ENCODE measurements at regions of chrX and their contacts with region 1.

Region 1: GRCh38 chrX:74133156-74133796 is 170.7 kb upstream of the ZCCHC13 start:
- DNase-seq: peak in 5 of 9 experiments; percentile 10 to 60 (median 28)
- ATAC-seq: peak; percentile 40
- H3K4me3 ChIP-seq: no peak overlapping the region
- H3K4me3 Mint-ChIP-seq: no peak overlapping the region
- H3K27ac ChIP-seq: no peak overlapping the region
- H3K27ac Mint-ChIP-seq: no peak overlapping the region
- H3K4me1 ChIP-seq: no peaks in the 10 kb centered on the region
- H3K4me1 Mint-ChIP-seq: no peaks in the 10 kb centered on the region
- H3K27me3 ChIP-seq: no peaks in the 10 kb centered on the region
- H3K27me3 Mint-ChIP-seq: no peaks in the 10 kb centered on the region
- CTCF ChIP-seq: no peak

Region 2: DNA sequence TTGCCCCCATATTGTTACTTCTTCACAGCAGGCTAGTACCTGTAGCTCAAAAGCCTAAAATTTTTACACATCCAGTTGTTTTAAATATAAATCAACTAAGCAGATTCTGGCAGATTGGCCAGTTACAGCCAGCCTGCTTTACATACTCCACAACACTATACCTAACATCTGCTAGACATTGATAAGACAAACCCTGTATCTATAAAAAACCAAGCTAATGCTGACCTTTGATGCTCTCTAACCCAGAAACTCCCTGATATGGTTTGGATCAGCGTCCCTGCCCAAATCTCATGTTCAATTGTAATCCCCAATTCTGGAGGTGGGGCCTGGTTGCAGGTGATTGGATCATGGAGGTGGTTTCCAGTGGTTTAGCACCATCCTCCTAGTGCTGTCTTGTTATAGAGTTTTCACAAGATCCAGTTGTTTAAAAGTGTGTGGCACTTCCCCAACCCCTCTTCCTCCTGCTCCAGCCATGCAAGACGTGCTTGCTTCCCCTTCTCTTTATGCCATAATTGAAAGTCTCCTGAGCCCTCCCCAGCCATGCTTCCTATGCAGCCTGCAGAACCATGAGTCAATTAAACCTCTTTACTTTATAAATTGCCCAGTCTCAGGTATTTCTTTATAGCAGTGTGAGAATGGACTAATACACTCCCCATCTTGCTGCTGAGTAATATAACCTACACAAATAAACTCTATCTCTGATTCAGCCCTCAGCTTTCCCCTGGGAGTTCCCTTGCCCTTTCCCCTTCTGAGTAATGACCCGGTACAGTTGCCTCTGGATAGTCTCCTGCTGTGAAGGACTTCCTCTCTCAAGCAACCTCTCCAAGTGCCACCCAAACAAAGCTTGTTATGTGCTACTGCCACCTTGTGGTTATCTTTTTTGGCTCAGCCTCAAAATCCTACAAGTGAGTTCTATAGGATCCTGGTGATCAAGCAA is 210.3 kb after region 1 on chrX:
- CTCF ChIA-PET with region 1: interaction called, 5 read pairs
- POLR2A ChIA-PET with region 1: no interaction called
- intact Hi-C with region 1: loop called (anchors 2 to 5 kb)
- DNase-seq: peak; percentile 1 to 67 (median 33)
- ATAC-seq: peak; percentile 40
- H3K4me3 ChIP-seq: no peak overlapping the region
- H3K4me3 Mint-ChIP-seq: no peak overlapping the region
- H3K27ac ChIP-seq: no peak overlapping the region
- H3K27ac Mint-ChIP-seq: no peak overlapping the region
- H3K4me1 ChIP-seq: no peaks in the 10 kb centered on the region
- H3K4me1 Mint-ChIP-seq: peaks cover 2% of the 10 kb centered on the region
- H3K27me3 ChIP-seq: no peaks in the 10 kb centered on the region
- H3K27me3 Mint-ChIP-seq: peaks cover 3% of the 10 kb centered on the region
- CTCF ChIP-seq: peak; percentile 36

Measured in CD8-positive, alpha-beta T cell (primary cell).